ENCODE measurements at regions of chr1 and their contacts with region 1.

Region 1: DNA sequence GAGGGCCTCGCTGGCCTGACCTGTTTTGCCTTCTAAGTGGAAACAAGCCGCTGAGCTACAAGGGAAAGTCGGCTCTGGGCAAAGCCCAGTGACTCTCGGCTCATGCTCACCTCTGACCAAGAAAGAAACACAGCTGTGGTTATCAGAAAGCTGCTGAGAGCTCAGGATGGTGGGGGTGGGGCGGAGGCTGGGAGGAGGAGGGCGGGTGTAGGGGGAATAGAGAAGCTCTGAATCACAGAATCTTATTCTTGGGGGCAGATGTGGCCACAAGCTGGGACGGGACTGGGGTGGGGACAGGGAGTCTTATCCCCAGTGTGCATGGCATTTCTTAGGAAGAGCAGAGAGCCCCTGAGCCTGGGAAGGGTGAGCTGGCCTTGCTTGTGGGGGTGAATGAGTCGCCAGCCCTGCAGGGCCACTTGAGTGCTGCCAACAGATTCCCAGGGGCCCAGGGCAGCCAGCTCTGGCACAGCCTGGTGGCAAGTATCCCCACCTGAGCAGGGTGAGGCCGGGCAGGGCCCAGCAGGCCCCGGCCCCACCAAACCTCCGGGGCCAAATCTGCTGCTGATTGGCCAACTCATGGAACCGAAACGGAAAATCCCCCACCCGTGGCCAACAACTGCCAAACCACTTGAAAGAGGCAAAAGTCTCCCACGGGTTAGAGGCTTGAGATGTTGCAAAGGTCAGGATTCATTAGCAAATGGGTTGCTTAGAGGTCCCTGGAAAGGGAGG is 120.6 kb downstream of the SPSB1 start:
- DNase-seq: peak; percentile 58 to 92
- H3K4me3 ChIP-seq: peak overlapping the region in 1 of 2 donors; percentile 32
- H3K27ac ChIP-seq: peak overlapping the region; percentile 92 to 94
- H3K4me1 ChIP-seq: peaks cover 24 to 35% of the 10 kb centered on the region in 2 donors
- H3K27me3 ChIP-seq: no peaks in the 10 kb centered on the region
- CTCF ChIP-seq: peak in 1 of 3 experiments; percentile 10

Region 2: GRCh38 chr1:9371391-9371935 is 41.8 kb before region 1 on chr1:
- intact Hi-C with region 1: loop called (anchors 1 kb)
- DNase-seq: peak; percentile 45 to 95
- H3K4me3 ChIP-seq: no peak overlapping the region
- H3K27ac ChIP-seq: peak overlapping the region; percentile 89 to 96
- H3K4me1 ChIP-seq: peaks cover 41 to 67% of the 10 kb centered on the region in 2 donors
- H3K27me3 ChIP-seq: no peaks in the 10 kb centered on the region
- CTCF ChIP-seq: no peak

Region 3: GRCh38 chr1:9399510-9400424 is 13.5 kb before region 1 on chr1:
- intact Hi-C with region 1: loop called (anchors 1 kb)
- DNase-seq: peak in 1 of 2 donors; percentile 82
- H3K4me3 ChIP-seq: no peak overlapping the region
- H3K27ac ChIP-seq: peak overlapping the region; percentile 87 to 93
- H3K4me1 ChIP-seq: peaks cover 34 to 55% of the 10 kb centered on the region in 2 donors
- H3K27me3 ChIP-seq: no peaks in the 10 kb centered on the region
- CTCF ChIP-seq: no peak

Region 4: DNA sequence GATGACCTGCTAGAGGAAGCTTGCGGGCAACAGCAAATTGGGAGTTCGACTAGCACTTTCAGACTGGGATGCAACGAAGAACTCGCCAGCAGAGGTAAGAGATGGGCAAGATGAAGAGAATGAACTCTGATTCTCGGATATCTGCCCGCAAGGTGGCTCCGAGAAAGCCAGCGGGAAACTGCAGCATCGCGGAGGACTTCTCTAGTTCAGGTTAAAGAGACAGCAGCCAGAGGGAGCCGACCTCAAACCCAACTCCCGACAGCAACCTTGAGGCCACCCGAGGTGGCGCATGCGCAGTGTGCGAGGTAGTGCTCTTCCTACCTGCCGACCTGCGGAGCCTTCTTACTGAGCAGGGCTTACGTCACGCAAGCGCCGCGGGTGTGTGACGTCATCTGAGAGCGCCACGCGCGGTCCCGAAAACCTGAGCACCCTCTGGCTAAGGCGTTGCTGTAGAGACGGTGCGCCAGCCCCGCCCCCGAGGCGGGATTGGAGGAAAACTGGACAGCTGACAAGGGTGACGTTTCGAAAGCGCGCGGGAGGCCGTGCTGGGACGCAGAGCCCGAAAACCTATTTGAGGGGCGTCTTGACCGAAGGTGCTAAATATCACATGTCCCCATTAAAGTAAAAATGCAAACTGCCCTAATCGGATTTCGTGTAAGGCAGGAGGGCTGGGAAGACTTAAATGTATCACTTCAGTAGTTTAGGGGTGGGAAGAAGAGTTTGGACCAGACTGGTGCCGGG is 15.5 kb after region 1 on chr1:
- intact Hi-C with region 1: loop called (anchors 2 kb)
- DNase-seq: peak; percentile 99 to 100
- H3K4me3 ChIP-seq: peak overlapping the region; percentile 49 to 65
- H3K27ac ChIP-seq: peak overlapping the region; percentile 85 to 86
- H3K4me1 ChIP-seq: peaks cover 5 to 10% of the 10 kb centered on the region in 2 donors
- H3K27me3 ChIP-seq: no peaks in the 10 kb centered on the region
- CTCF ChIP-seq: peak in 1 of 3 experiments; percentile 8

Region 5: GRCh38 chr1:9438431-9439073 is 25.2 kb after region 1 on chr1:
- intact Hi-C with region 1: loop called (anchors 1 kb)
- DNase-seq: peak in 1 of 2 donors; percentile 90
- H3K4me3 ChIP-seq: no peak overlapping the region
- H3K27ac ChIP-seq: peak overlapping the region; percentile 79 to 92
- H3K4me1 ChIP-seq: peaks cover 25 to 57% of the 10 kb centered on the region in 2 donors
- H3K27me3 ChIP-seq: no peaks in the 10 kb centered on the region
- CTCF ChIP-seq: no peak